Testis (tissue), 5 donors: ENCODE measurements at regions of chr7 and their contacts with region 1.

Region 1: DNA sequence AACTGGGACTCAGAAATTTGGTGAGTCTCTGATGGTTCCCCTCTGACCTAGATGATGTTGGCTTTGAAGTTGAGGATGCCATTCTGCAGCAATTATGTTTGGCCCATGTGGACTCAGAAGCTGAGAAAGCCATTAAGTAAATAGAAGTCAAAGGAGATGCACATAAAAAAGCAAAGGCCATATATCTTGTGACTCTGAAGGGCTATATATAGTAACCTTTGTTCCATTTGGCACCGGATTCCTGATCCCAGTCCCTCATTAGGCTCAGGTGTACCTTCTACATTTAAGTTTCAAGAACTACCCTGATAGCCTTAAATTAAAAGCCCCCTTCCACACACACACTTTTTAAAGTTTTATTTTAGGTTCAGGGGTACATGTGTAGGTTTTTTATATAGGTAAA is 50.0 kb upstream of the PDK4 start:
- DNase-seq: no peak
- H3K4me3 ChIP-seq: no peak overlapping the region
- H3K27ac ChIP-seq: no peak overlapping the region
- H3K4me1 ChIP-seq: no peaks in the 10 kb centered on the region
- H3K27me3 ChIP-seq: no peaks in the 10 kb centered on the region
- CTCF ChIP-seq: no peak
- POLR2A ChIP-seq: no peak

Region 2: GRCh38 chr7:95411036-95411435 is 235.3 kb before region 1 on chr7:
- intact Hi-C with region 1: no loop called
- DNase-seq: no peak
- H3K4me3 ChIP-seq: no peak overlapping the region
- H3K27ac ChIP-seq: no peak overlapping the region
- H3K4me1 ChIP-seq: no peaks in the 10 kb centered on the region
- H3K27me3 ChIP-seq: no peaks in the 10 kb centered on the region
- CTCF ChIP-seq: no peak
- POLR2A ChIP-seq: no peak

Region 3: DNA sequence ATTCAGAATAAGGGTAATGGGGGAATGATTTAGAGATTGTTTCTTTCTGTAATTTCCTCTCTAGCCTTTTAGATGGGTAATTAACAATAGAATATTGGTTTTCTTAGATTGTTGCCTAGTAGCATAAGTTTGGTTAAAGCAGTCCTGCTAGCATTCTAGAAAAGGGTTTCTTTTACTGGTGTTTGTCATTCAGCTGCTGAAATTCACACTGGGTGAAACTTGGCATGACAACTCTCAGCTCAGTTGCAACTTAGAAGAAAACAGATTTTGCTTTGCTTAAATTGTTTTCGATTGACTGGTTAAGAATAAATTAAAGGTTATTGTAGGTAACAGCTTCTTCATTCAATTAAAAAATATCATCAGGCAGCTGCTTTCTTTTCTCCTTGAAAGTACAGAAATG is 24.9 kb before region 1 on chr7:
- intact Hi-C with region 1: loop called (anchors 2 kb)
- DNase-seq: no peak
- H3K4me3 ChIP-seq: no peak overlapping the region
- H3K27ac ChIP-seq: no peak overlapping the region
- H3K4me1 ChIP-seq: no peaks in the 10 kb centered on the region
- H3K27me3 ChIP-seq: no peaks in the 10 kb centered on the region
- CTCF ChIP-seq: no peak
- POLR2A ChIP-seq: no peak